ENCODE measurements at regions of chr1 and their contacts with region 1.

Region 1: DNA sequence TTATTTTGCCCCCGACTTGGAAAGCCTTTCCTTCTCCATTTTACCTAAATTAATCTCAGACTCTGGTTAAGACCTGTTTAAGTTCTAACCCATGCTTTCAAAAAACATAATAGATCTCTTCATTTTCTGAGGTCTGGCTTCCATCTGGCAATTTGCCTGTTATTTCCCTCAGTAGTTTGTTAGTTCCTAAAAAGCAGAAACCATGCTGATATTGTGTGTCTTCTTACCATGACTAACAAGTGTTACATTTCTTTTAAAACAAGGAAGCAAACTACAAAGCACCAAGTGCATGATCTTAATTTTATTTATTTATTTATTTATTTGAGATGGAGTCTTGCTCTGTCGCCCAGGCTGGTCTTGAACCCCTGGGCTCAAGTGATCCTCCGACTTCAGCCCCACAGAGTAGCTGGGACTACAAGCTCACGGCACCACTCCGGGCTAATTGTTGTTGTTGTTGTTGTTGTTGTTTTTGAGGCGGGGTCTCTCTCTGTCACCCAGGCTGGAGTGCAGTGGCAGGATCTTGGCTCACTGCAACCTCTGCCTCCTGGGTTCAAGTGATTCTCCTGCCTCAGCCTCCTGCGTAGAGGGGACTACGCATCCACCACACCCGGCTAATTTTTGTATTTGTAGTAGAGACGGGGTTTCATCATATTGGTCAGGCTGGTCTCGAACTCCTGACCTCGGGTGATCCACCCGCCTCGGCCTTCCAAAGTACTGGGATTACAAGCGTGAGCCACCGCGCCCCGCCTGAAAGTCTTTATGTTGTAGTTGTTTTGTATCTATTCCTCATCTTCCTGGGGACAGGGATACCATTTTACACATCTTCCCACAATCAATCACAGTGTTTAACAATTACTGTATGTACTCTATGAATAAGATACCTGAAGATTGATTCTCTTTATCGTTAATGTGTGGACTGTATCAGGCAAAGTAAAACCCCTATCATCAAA is 1.3 kb upstream of the PATJ start:
- DNase-seq: no peak

Region 2: DNA sequence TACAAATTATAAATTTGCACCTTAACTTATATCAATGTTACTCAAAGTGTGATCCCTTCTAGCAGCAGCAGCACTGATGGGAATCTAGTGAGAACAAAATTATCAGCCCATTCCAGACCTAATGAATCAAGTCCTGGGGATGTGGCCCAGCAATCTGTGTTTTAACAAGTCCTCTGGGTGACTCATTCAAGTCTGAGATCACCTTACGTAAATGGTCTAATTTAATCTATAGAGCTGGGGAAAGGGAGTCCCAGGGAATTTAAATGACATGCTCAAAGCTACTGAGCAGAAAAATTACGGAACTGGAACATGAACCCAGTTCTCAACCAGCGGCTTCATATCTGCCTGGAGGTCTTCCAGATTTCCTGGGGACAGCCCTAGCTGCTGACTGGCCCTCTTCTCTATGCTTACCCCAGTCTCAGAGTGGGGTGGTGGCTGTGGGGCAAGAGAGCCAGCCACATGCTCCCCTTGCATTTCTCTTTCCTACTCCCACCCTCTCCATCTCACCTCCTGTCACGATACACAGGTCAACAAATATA is 236.1 kb before region 1 on chr1:
- CTCF ChIA-PET with region 1: interaction called, 11 read pairs
- POLR2A ChIA-PET with region 1: no interaction called
- DNase-seq: peak; percentile 40

Measured in HEK293T (cell line).